Esophagus muscularis mucosa (tissue), 4 donors: ENCODE measurements at regions of chr2 and their contacts with region 1.

Region 1: GRCh38 chr2:40451918-40452605 is at the start of gene SLC8A1:
- DNase-seq: no peak
- H3K4me3 ChIP-seq: peak within 1 kb of the TSS; percentile 66 to 79 (median 70)
- H3K27ac ChIP-seq: peak within 1 kb of the TSS; percentile 89 to 92 (median 90)
- H3K4me1 ChIP-seq: peaks cover 41 to 47% (median 45%) of the 10 kb centered on the region in 4 donors
- H3K27me3 ChIP-seq: no peaks in the 10 kb centered on the region
- CTCF ChIP-seq: peak in 1 of 3 experiments; percentile 8
- EP300 ChIP-seq: no peak
- POLR2A ChIP-seq: no peak
- total RNA-seq, gene SLC8A1: 105 to 166 (median 157) TPM

Region 2: GRCh38 chr2:39033980-39034379 is 1418.1 kb before region 1 on chr2:
- intact Hi-C with region 1: no loop called
- DNase-seq: no peak
- H3K4me3 ChIP-seq: no peak overlapping the region
- H3K27ac ChIP-seq: no peak overlapping the region
- H3K4me1 ChIP-seq: peaks cover 0 to 8% (median 0%) of the 10 kb centered on the region in 4 donors
- H3K27me3 ChIP-seq: no peaks in the 10 kb centered on the region
- CTCF ChIP-seq: no peak
- EP300 ChIP-seq: no peak
- POLR2A ChIP-seq: no peak

Region 3: DNA sequence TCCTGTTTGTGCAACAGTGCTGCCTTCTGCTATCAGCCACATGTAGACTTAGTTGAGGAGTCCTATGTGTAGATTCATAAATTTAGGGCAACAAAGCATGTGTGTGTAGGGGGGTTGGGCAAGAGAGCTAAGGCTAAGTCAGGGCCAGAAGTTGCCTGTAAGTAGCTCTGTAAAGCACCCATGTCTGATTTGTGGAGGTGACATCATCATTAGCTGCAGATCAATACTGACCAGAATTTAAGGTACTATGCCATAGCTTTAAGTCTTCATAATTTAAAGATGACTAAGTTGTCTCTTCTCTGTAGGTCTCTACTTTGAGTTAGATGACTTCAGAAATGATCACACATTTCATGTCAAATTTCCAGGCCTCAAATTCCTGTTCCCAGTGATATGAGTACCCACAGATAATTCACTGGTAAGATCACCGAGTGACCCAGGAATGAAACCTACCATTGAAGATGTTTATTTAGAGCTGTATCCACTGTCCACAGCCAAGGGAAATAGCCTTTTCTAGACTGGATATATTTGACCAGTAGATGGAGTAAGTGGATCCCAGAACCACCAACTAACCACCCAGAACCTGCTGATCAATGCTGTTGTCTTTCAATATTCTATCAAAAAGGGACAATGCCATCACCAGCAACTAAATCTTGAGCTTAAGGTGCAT is 239.1 kb before region 1 on chr2:
- intact Hi-C with region 1: loop called (anchors 10 kb)
- DNase-seq: no peak
- H3K4me3 ChIP-seq: no peak overlapping the region
- H3K27ac ChIP-seq: peak overlapping the region in 2 of 4 donors; percentile 33 to 55
- H3K4me1 ChIP-seq: peaks cover 17 to 22% (median 19%) of the 10 kb centered on the region in 4 donors
- H3K27me3 ChIP-seq: no peaks in the 10 kb centered on the region
- CTCF ChIP-seq: peak; percentile 39 to 53 (median 44)
- EP300 ChIP-seq: no peak
- POLR2A ChIP-seq: no peak

Region 4: GRCh38 chr2:40244675-40245074 is 207.4 kb before region 1 on chr2:
- intact Hi-C with region 1: loop called (anchors 10 kb)
- DNase-seq: no peak
- H3K4me3 ChIP-seq: no peak overlapping the region
- H3K27ac ChIP-seq: peak overlapping the region; percentile 24 to 62 (median 52)
- H3K4me1 ChIP-seq: peaks cover 40 to 66% (median 59%) of the 10 kb centered on the region in 4 donors
- H3K27me3 ChIP-seq: no peaks in the 10 kb centered on the region
- CTCF ChIP-seq: peak; percentile 40 to 65 (median 62)
- EP300 ChIP-seq: no peak
- POLR2A ChIP-seq: no peak

Region 5: GRCh38 chr2:40554668-40555285 is 102.7 kb after region 1 on chr2:
- intact Hi-C with region 1: loop called (anchors 5 kb)
- DNase-seq: no peak
- H3K4me3 ChIP-seq: no peak overlapping the region
- H3K27ac ChIP-seq: no peak overlapping the region
- H3K4me1 ChIP-seq: no peaks in the 10 kb centered on the region
- H3K27me3 ChIP-seq: no peaks in the 10 kb centered on the region
- CTCF ChIP-seq: peak; percentile 89 to 93 (median 92)
- EP300 ChIP-seq: no peak
- POLR2A ChIP-seq: no peak